ENCODE measurements at regions of chr2 and their contacts with region 1.

Region 1: DNA sequence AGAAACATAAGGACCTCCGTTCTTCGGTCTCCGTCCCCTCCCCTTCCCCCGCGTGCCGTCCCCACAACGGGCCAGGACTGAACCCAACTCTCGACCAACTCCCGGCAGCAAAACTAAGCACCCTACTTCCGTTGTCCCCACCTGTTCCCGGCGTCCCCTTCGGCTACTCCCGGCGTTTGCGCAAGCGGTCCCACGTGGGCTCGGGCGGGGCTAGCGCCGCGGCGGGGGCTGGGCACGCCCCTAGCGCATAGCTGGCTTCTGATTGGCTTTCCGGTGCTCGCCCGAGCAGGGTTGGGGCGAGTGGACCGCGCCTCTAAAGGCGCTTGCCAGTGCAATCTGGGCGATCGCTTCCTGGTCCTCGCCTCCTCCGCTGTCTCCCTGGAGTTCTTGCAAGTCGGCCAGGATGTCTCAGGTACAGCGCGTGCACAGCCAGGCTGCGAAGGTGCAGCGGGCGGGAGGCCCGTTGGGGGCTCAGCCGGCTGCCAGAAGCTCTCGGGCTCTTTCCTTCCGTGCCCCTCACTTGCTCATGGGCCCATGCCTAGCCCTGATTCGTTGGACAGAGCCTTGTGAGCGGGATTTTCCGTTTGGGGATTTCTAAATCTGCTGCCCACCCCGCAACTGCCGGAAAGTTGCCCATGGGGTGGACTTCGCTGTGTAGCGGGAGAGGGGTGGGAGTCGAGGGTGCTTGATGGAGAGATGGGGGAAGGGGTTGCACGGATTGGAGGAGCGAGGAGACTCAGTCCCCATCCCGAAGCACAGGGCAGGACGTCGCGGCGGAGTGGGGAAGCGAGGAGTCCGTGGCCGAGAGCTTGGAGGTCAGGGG is at the starts of genes C2orf76 and DBI:
- DNase-seq: peak; percentile 95
- H3K4me3 ChIP-seq: peak within 1 kb of the TSS; percentile 66 to 86 (median 73)
- H3K27ac ChIP-seq: peak within 1 kb of the TSS; percentile 63
- H3K4me1 ChIP-seq: peaks cover 21% of the 10 kb centered on the region
- H3K27me3 ChIP-seq: no peaks in the 10 kb centered on the region
- CTCF ChIP-seq: no peak
- POLR2A ChIP-seq: peak; percentile 89
- total RNA-seq, gene C2orf76: 12.0 and 12.1 TPM in 2 replicates
- total RNA-seq, gene DBI: 214 and 245 TPM in 2 replicates

Region 2: GRCh38 chr2:119223521-119224390 is 143.1 kb before region 1 on chr2 and contains the start of gene STEAP3:
- CTCF ChIA-PET with region 1: no interaction called
- POLR2A ChIA-PET with region 1: no interaction called
- dilution Hi-C with region 1: no loop called
- intact Hi-C with region 1: loop called (anchors 2 kb)
- DNase-seq: peak; percentile 41
- H3K4me3 ChIP-seq: peak within 1 kb of the TSS; percentile 49 to 85 (median 63)
- H3K27ac ChIP-seq: no peak within 1 kb of the TSS
- H3K4me1 ChIP-seq: peaks cover 8% of the 10 kb centered on the region
- H3K27me3 ChIP-seq: no peaks in the 10 kb centered on the region
- CTCF ChIP-seq: no peak
- POLR2A ChIP-seq: peak; percentile 37
- total RNA-seq, gene STEAP3: 12.7 and 17.4 TPM in 2 replicates

Region 3: DNA sequence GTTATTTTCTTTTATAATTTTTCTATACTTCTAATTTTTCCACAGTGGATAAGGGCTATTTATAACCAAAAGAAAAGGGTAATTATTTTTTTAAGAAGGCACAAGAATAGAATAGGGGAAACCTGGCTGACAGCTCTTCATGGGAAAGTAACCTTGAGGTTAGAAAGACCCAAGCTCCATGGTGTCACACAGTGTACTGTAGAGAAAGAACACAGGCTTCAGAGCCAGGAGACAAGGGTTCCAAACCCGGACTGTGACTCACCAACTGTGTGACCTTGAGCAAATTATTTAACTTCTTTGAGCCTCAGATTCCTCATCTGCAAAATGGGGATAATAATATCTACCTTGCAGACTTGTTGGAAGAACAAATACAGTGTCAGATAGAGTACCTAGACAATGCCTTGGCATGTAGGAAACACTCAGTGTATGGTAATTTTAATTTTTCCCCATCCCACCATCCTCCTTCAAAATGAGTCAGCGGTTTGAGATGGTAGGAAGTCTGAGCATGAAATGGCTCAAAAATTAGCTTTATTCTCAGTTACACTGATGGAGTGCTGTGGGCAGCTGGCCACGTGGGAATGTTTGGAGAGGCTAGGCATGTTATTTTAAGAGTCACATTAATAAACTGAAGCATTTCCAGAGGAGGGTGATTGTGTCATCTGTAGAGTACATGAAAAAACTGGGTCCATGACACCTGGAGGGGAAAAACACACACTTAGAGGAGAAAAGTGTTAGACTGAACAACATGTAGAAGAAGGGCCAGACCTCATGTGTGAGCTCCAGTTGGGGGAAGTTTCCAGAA is 101.5 kb after region 1 on chr2:
- CTCF ChIA-PET with region 1: no interaction called
- POLR2A ChIA-PET with region 1: no interaction called
- dilution Hi-C with region 1: no loop called
- intact Hi-C with region 1: no loop called
- DNase-seq: no peak
- H3K4me3 ChIP-seq: no peak overlapping the region
- H3K27ac ChIP-seq: no peak overlapping the region
- H3K4me1 ChIP-seq: no peaks in the 10 kb centered on the region
- H3K27me3 ChIP-seq: peaks cover 3% of the 10 kb centered on the region in 2 experiments
- CTCF ChIP-seq: no peak
- POLR2A ChIP-seq: no peak